ENCODE measurements at regions of chr19 and their contacts with region 1.

Region 1: GRCh38 chr19:8654591-8655339 is 24.3 kb downstream of the NFILZ start:
- DNase-seq: peak; percentile 21 to 83 (median 57)
- ATAC-seq: peak; percentile 58 to 81 (median 76)
- H3K4me3 ChIP-seq: peak overlapping the region; percentile 21 to 61
- H3K4me3 Mint-ChIP-seq: peak overlapping the region; percentile 43 to 58 (median 52)
- H3K27ac ChIP-seq: no peak overlapping the region
- H3K27ac Mint-ChIP-seq: peak overlapping the region in 1 of 2 donors; percentile 31
- H3K4me1 ChIP-seq: peaks cover 9 to 28% of the 10 kb centered on the region in 2 experiments
- H3K4me1 Mint-ChIP-seq: peaks cover 23 to 37% (median 25%) of the 10 kb centered on the region in 3 donors
- H3K27me3 ChIP-seq: peaks cover 0 to 15% of the 10 kb centered on the region in 2 experiments
- H3K27me3 Mint-ChIP-seq: peaks cover 2 to 4% of the 10 kb centered on the region in 2 donors

Region 2: GRCh38 chr19:8697671-8698432 is 43.1 kb after region 1 on chr19:
- CTCF ChIA-PET with region 1: interaction called, 11 read pairs
- POLR2A ChIA-PET with region 1: no interaction called
- DNase-seq: peak in 1 of 35 experiments; percentile 16
- ATAC-seq: no peak
- H3K4me3 ChIP-seq: no peak overlapping the region
- H3K4me3 Mint-ChIP-seq: no peak overlapping the region
- H3K27ac ChIP-seq: no peak overlapping the region
- H3K27ac Mint-ChIP-seq: no peak overlapping the region
- H3K4me1 ChIP-seq: peaks cover 6 to 47% of the 10 kb centered on the region in 2 experiments
- H3K4me1 Mint-ChIP-seq: peaks cover 31 to 48% (median 41%) of the 10 kb centered on the region in 3 donors
- H3K27me3 ChIP-seq: peaks cover 0 to 30% of the 10 kb centered on the region in 2 experiments
- H3K27me3 Mint-ChIP-seq: no peaks in the 10 kb centered on the region